H1 (cell line): ENCODE measurements at regions of chr19 and their contacts with region 1.

Region 1: GRCh38 chr19:46404055-46404752 is 9.2 kb downstream of the CCDC8 start:
- DNase-seq: peak in 1 of 2 experiments; percentile 83
- H3K4me3 ChIP-seq: peak overlapping the region; percentile 18 to 57 (median 40)
- H3K27ac ChIP-seq: no peak overlapping the region
- H3K4me1 ChIP-seq: peaks cover 0 to 27% (median 18%) of the 10 kb centered on the region in 4 experiments; a peak in 5 of 7 replicates
- H3K27me3 ChIP-seq: peaks cover 0 to 34% (median 19%) of the 10 kb centered on the region in 4 experiments; a peak in 6 of 7 replicates
- CTCF ChIP-seq: peak in 1 of 3 experiments; percentile 6; a peak in 1 of 4 replicates
- EP300 ChIP-seq: no peak
- POLR2A ChIP-seq: no peak
- RAD21 ChIP-seq: no peak

Region 2: DNA sequence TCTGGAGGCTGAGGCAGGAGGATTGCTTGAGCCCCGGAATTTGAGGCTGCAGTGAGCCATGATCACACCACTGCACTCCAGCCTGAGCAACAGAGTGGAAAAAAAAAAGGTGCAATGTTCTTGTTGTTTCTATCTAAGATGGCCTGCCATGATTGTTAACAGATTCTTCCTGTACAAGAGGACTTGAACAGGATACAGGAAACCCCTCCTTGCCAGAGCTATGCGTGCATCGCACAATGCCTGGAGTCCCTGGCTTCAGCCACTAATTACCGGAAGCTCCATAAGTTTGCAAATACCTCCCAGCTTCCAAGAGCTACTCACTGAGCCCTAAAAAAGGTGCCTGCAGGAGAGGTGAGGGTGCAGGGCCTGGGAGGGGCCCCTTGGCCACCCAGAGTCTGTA is 120.4 kb before region 1 on chr19:
- CTCF ChIA-PET with region 1: interaction called, 18 read pairs
- POLR2A ChIA-PET with region 1: no interaction called
- DNase-seq: no peak
- H3K4me3 ChIP-seq: no peak overlapping the region
- H3K27ac ChIP-seq: no peak overlapping the region
- H3K4me1 ChIP-seq: peaks cover 0 to 3% (median 3%) of the 10 kb centered on the region in 4 experiments; a peak in 5 of 7 replicates
- H3K27me3 ChIP-seq: no peaks in the 10 kb centered on the region
- CTCF ChIP-seq: no peak
- EP300 ChIP-seq: no peak
- POLR2A ChIP-seq: no peak
- RAD21 ChIP-seq: no peak

Region 3: GRCh38 chr19:46339446-46339845 is 64.8 kb before region 1 on chr19:
- CTCF ChIA-PET with region 1: no interaction called
- POLR2A ChIA-PET with region 1: no interaction called
- DNase-seq: no peak
- H3K4me3 ChIP-seq: no peak overlapping the region
- H3K27ac ChIP-seq: no peak overlapping the region
- H3K4me1 ChIP-seq: no peaks in the 10 kb centered on the region
- H3K27me3 ChIP-seq: no peaks in the 10 kb centered on the region
- CTCF ChIP-seq: no peak
- EP300 ChIP-seq: no peak
- POLR2A ChIP-seq: no peak
- RAD21 ChIP-seq: no peak

Region 4: GRCh38 chr19:46482631-46483030 is 78.4 kb after region 1 on chr19:
- CTCF ChIA-PET with region 1: interaction called, 254 read pairs
- POLR2A ChIA-PET with region 1: interaction called, 4 read pairs
- DNase-seq: no peak
- H3K4me3 ChIP-seq: no peak overlapping the region
- H3K27ac ChIP-seq: no peak overlapping the region
- H3K4me1 ChIP-seq: peaks cover 0 to 12% (median 5%) of the 10 kb centered on the region in 4 experiments; a peak in 4 of 7 replicates
- H3K27me3 ChIP-seq: peaks cover 0 to 12% (median 4%) of the 10 kb centered on the region in 4 experiments; a peak in 6 of 7 replicates
- CTCF ChIP-seq: no peak
- EP300 ChIP-seq: no peak
- POLR2A ChIP-seq: no peak
- RAD21 ChIP-seq: no peak

Region 5: GRCh38 chr19:46503848-46504453 is 99.7 kb after region 1 on chr19:
- CTCF ChIA-PET with region 1: interaction called, 10 read pairs
- POLR2A ChIA-PET with region 1: no interaction called
- DNase-seq: no peak
- H3K4me3 ChIP-seq: no peak overlapping the region
- H3K27ac ChIP-seq: no peak overlapping the region
- H3K4me1 ChIP-seq: no peaks in the 10 kb centered on the region
- H3K27me3 ChIP-seq: no peaks in the 10 kb centered on the region
- CTCF ChIP-seq: no peak
- EP300 ChIP-seq: no peak
- POLR2A ChIP-seq: no peak
- RAD21 ChIP-seq: no peak

Region 6: GRCh38 chr19:46537136-46538097 is 133.2 kb after region 1 on chr19:
- CTCF ChIA-PET with region 1: interaction called, 10 read pairs
- POLR2A ChIA-PET with region 1: no interaction called
- DNase-seq: peak in 1 of 2 experiments; percentile 93
- H3K4me3 ChIP-seq: no peak overlapping the region; a peak in 1 of 8 replicates
- H3K27ac ChIP-seq: no peak overlapping the region
- H3K4me1 ChIP-seq: no peaks in the 10 kb centered on the region; a peak in 2 of 7 replicates
- H3K27me3 ChIP-seq: no peaks in the 10 kb centered on the region
- CTCF ChIP-seq: peak; percentile 71 to 97 (median 96)
- EP300 ChIP-seq: no peak
- POLR2A ChIP-seq: no peak
- RAD21 ChIP-seq: peak; percentile 2 to 43; a peak in 3 of 4 replicates

Region 7: GRCh38 chr19:46550684-46551083 is 146.5 kb after region 1 on chr19:
- CTCF ChIA-PET with region 1: no interaction called
- POLR2A ChIA-PET with region 1: no interaction called
- DNase-seq: no peak
- H3K4me3 ChIP-seq: no peak overlapping the region
- H3K27ac ChIP-seq: no peak overlapping the region
- H3K4me1 ChIP-seq: peaks cover 2 to 5% (median 4%) of the 10 kb centered on the region in 4 experiments; a peak in 4 of 7 replicates
- H3K27me3 ChIP-seq: no peaks in the 10 kb centered on the region
- CTCF ChIP-seq: no peak
- EP300 ChIP-seq: no peak
- POLR2A ChIP-seq: no peak
- RAD21 ChIP-seq: no peak